Mammary epithelial cell (primary cell): ENCODE measurements at regions of chr1 and their contacts with region 1.

Region 1: GRCh38 chr1:35359995-35360394 is 91.5 kb downstream of the ZMYM4 start:
- DNase-seq: no peak
- H3K4me3 ChIP-seq: no peak overlapping the region
- H3K27ac ChIP-seq: no peak overlapping the region
- H3K4me1 ChIP-seq: no peaks in the 10 kb centered on the region
- H3K27me3 ChIP-seq: no peaks in the 10 kb centered on the region
- CTCF ChIP-seq: no peak

Region 2: DNA sequence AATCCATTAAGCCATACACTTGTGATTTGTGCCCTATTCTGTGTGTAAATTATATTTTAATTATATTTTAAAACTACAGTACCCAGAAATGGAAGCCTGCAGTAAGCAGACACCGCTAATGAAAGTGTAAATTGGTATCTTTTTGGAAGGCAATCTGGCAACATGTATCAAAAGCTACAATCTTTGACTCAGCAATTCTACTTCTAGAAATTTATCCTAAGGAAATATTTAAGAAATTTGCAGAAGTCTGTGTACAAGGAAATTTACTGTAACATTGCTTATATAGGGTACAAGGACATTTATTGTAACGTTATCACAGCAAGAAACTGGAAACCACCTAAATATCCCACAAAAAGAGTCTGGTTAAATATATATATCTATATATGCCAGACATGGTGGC is 106.1 kb before region 1 on chr1:
- CTCF ChIA-PET with region 1: no interaction called
- dilution Hi-C with region 1: loop called (anchors 5 kb)
- in situ Hi-C with region 1: no loop called
- intact Hi-C with region 1: no loop called
- DNase-seq: no peak
- H3K4me3 ChIP-seq: no peak overlapping the region
- H3K27ac ChIP-seq: no peak overlapping the region
- H3K4me1 ChIP-seq: no peaks in the 10 kb centered on the region
- H3K27me3 ChIP-seq: no peaks in the 10 kb centered on the region
- CTCF ChIP-seq: no peak